Activated T-helper 2 cell treated with anti-CD3 and anti-CD28 coated beads, Interferon-gamma antibody, Interleukin-2, Interleukin-4, amounts not matched to agents 10 μg/mL and 5 μg/mL and 100 μg/mL, durations not matched to agents 14 hours and 24 hours and 36 hours (primary cell): ENCODE measurements at regions of chr3 and their contacts with region 1.

Region 1: DNA sequence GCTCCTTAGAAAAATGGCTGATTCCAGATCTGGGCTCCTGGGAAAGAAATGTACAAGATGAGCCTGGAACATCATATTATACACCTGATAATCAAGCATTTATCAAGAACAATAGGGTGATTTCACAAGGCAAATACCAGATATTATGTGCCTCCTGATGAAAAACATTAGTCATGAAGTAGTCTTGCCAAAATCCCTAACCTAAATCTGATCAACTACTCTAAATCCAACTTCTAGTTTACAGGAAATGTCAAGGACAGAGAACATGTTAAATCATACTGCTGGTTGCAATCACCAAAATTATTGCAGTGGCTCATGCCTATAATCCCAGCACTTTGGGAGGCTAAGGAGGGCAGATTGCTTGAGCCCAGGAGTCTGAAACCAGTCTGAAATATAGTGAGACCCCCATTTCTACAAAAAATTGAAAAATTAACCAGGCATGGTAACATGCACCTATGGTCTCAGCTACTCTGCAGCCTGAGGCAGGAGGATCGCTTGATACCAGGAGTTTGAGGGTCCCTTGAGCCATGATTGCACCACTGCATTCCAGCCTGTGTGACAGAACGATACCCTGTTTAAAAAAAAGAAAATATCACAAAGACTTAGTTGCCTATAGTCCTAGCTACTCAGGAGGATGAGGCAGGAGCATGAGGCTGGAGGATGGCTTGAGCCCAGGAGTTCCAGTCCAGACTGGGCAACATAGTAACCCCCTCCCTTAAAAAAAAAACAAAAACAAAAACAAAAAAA is 34.9 kb upstream of the ATP13A3 start:
- DNase-seq: no peak
- H3K4me3 Mint-ChIP-seq: no peak overlapping the region
- H3K27ac Mint-ChIP-seq: no peak overlapping the region
- H3K4me1 Mint-ChIP-seq: peaks cover 27% of the 10 kb centered on the region
- H3K27me3 Mint-ChIP-seq: no peaks in the 10 kb centered on the region

Region 2: DNA sequence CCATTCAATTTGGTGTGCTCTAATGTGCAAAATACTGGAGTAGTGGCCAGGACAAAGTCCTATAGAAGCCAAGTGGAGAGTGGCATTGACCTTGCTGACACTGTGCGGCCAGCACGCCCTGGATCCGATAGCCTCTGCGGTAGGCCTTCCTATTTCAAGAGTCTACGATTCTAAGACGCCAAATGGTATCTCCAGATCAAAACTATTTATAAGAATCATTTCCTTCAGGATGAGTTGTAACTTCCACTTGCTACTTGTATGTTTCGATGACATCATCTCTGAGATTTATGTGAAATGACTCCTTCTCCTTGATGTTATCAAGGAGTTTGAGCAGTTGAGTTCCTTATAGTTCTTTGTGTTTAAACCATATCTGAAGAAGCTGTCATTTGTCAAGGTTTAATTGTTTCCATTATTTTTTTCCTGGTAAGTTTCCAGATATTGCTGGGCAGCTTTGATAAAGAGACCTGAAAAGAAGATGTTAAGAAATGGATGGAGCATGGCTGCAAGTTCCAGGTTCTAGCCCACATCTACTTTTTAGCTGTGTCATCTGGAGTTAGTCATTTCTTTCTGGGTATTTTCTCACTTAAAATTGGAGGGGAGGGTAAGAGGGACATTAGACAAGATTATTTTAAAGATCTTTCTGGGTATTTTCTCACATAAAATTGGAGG is 39.8 kb after region 1 on chr3:
- intact Hi-C with region 1: loop called (anchors 1 kb)
- DNase-seq: no peak
- H3K4me3 Mint-ChIP-seq: no peak overlapping the region
- H3K27ac Mint-ChIP-seq: peak overlapping the region; percentile 40
- H3K4me1 Mint-ChIP-seq: peaks cover 19% of the 10 kb centered on the region
- H3K27me3 Mint-ChIP-seq: peaks cover 18% of the 10 kb centered on the region